Activated CD4-positive, alpha-beta T cell treated with anti-CD3 and anti-CD28 coated beads for 36 hours (primary cell): ENCODE measurements at regions of chr17 and their contacts with region 1.

Region 1: GRCh38 chr17:39927101-39927928 is at the starts of genes LRRC3C and ORMDL3:
- DNase-seq: peak; percentile 96
- ATAC-seq: peak; percentile 78
- H3K4me3 Mint-ChIP-seq: peak within 1 kb of the TSS; percentile 85
- H3K27ac Mint-ChIP-seq: peak within 1 kb of the TSS; percentile 95
- H3K4me1 Mint-ChIP-seq: peaks cover 56% of the 10 kb centered on the region
- H3K27me3 Mint-ChIP-seq: no peaks in the 10 kb centered on the region
- total RNA-seq, gene LRRC3C: not detected
- total RNA-seq, gene ORMDL3: 46.8 to 64.9 TPM

Region 2: DNA sequence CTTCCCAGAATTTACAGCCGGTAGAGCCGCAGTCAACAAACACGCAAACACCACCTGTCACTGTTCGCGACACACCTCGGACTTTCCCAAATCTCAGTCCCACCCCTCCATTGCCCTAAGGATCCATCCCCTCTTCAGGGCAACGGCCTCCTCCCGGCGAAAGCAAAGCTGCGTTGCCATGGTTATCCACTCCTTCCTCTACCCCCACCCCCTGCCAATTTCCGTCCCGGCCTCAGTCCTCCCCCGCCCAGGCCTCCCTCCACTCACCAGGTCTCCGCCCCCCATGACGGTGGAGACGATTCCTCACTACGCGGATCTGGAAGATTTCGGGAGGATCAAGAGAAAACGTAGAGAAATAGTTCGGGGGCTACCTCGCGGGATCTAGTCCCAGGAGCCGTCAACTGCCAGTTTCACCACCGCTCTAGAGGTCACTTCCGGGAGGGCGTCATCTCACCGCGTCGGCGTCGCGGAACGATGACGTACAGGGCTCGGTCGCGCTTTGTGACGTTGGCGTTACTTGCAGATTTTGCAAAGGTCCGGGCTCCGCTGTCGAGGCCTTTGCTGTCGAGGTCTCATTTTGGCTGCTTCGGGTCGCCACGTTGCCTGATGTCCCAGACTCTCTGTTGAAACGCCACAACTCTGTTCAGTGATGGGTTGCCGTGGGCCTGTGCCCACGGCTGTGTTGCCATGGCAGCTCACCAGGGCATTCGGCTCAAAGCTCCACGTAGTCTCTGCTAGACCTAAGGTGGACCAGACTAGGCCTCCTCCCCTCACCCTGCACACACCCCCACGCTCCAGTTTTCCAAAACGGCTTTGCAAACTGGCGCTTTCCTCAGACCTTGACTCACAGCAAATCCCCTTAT is 1102.2 kb before region 1 on chr17 and contains the start of gene CWC25:
- CTCF ChIA-PET with region 1: no interaction called
- POLR2A ChIA-PET with region 1: no interaction called
- intact Hi-C with region 1: loop called in 1 of 2 experiments (anchors 1 kb)
- DNase-seq: peak; percentile 95
- ATAC-seq: peak; percentile 82
- H3K4me3 Mint-ChIP-seq: peak within 1 kb of the TSS; percentile 99
- H3K27ac Mint-ChIP-seq: peak within 1 kb of the TSS; percentile 99
- H3K4me1 Mint-ChIP-seq: peaks cover 27% of the 10 kb centered on the region
- H3K27me3 Mint-ChIP-seq: no peaks in the 10 kb centered on the region
- total RNA-seq, gene CWC25: 23.3 to 24.0 TPM

Region 3: GRCh38 chr17:39064374-39064773 is 862.9 kb before region 1 on chr17:
- CTCF ChIA-PET with region 1: no interaction called
- POLR2A ChIA-PET with region 1: no interaction called
- intact Hi-C with region 1: no loop called
- DNase-seq: no peak
- ATAC-seq: no peak
- H3K4me3 Mint-ChIP-seq: no peak overlapping the region
- H3K27ac Mint-ChIP-seq: no peak overlapping the region
- H3K4me1 Mint-ChIP-seq: peaks cover 11% of the 10 kb centered on the region
- H3K27me3 Mint-ChIP-seq: no peaks in the 10 kb centered on the region

Region 4: GRCh38 chr17:39174907-39175694 is 752.2 kb before region 1 on chr17:
- CTCF ChIA-PET with region 1: no interaction called
- POLR2A ChIA-PET with region 1: no interaction called
- intact Hi-C with region 1: no loop called
- DNase-seq: peak; percentile 87
- ATAC-seq: peak; percentile 88
- H3K4me3 Mint-ChIP-seq: no peak overlapping the region
- H3K27ac Mint-ChIP-seq: no peak overlapping the region
- H3K4me1 Mint-ChIP-seq: peaks cover 9% of the 10 kb centered on the region
- H3K27me3 Mint-ChIP-seq: no peaks in the 10 kb centered on the region

Region 5: GRCh38 chr17:39450847-39451581 is 476.3 kb before region 1 on chr17 and contains the start of gene MED1:
- CTCF ChIA-PET with region 1: interaction called, 4 read pairs
- POLR2A ChIA-PET with region 1: no interaction called
- intact Hi-C with region 1: loop called in 1 of 2 experiments (anchors 1 kb)
- DNase-seq: peak; percentile 96
- ATAC-seq: peak; percentile 99
- H3K4me3 Mint-ChIP-seq: peak within 1 kb of the TSS; percentile 96
- H3K27ac Mint-ChIP-seq: peak within 1 kb of the TSS; percentile 96
- H3K4me1 Mint-ChIP-seq: peaks cover 30% of the 10 kb centered on the region
- H3K27me3 Mint-ChIP-seq: no peaks in the 10 kb centered on the region
- total RNA-seq, gene MED1: 66.1 to 76.1 TPM

Region 6: DNA sequence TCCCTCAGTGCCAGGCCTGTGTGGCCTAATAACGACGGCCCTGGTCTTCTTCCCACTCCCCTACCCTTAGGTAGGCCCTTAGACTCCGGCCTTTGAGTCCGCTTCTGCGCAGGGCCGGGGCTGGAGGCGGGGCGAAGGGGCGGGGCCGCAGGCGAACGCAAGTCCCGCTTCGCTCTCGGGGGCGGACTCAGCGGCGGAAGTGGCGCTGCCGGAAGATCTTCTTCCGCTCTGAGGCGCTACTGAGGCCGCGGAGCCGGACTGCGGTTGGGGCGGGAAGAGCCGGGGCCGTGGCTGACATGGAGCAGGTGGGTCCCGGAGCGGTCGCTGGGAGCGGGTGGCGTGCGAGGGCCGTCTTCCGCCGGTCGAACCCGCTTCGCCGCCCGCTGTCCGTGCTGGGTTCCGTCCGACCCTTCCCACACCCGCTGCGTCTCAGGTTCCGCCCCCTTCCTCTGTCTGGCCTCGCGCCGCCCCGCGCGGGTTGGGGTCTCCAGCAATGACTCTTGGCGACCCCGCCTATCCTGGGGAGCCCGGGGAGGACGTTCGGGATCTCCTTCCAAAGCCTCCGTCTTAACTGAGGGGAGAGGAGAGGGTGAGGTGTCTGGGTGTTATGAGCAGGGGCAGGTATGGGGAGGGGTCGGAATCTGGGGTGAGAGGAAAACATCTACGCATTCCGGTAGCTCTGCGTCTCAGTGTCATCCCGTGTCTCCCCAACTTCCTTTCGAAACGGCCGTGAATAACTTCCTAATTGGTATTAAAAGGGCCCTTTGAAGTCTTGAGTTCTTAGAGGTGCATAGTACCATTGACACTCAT is 290.2 kb before region 1 on chr17 and contains the start of gene STARD3:
- CTCF ChIA-PET with region 1: no interaction called
- POLR2A ChIA-PET with region 1: no interaction called
- intact Hi-C with region 1: loop called in 1 of 2 experiments (anchors 1 kb)
- DNase-seq: peak; percentile 96
- ATAC-seq: peak; percentile 87
- H3K4me3 Mint-ChIP-seq: peak within 1 kb of the TSS; percentile 86
- H3K27ac Mint-ChIP-seq: peak within 1 kb of the TSS; percentile 83
- H3K4me1 Mint-ChIP-seq: peaks cover 51% of the 10 kb centered on the region
- H3K27me3 Mint-ChIP-seq: no peaks in the 10 kb centered on the region
- total RNA-seq, gene STARD3: 46.8 to 77.9 TPM

Region 7: GRCh38 chr17:39730095-39730921 is 197.0 kb before region 1 on chr17 and contains the start of gene MIEN1:
- CTCF ChIA-PET with region 1: no interaction called
- POLR2A ChIA-PET with region 1: interaction called, 3 read pairs
- intact Hi-C with region 1: loop called in 1 of 2 experiments (anchors 1 kb)
- DNase-seq: peak; percentile 97
- ATAC-seq: peak; percentile 92
- H3K4me3 Mint-ChIP-seq: peak within 1 kb of the TSS; percentile 90
- H3K27ac Mint-ChIP-seq: peak within 1 kb of the TSS; percentile 88
- H3K4me1 Mint-ChIP-seq: peaks cover 15% of the 10 kb centered on the region
- H3K27me3 Mint-ChIP-seq: no peaks in the 10 kb centered on the region
- total RNA-seq, gene MIEN1: 32.5 to 39.4 TPM

Region 8: DNA sequence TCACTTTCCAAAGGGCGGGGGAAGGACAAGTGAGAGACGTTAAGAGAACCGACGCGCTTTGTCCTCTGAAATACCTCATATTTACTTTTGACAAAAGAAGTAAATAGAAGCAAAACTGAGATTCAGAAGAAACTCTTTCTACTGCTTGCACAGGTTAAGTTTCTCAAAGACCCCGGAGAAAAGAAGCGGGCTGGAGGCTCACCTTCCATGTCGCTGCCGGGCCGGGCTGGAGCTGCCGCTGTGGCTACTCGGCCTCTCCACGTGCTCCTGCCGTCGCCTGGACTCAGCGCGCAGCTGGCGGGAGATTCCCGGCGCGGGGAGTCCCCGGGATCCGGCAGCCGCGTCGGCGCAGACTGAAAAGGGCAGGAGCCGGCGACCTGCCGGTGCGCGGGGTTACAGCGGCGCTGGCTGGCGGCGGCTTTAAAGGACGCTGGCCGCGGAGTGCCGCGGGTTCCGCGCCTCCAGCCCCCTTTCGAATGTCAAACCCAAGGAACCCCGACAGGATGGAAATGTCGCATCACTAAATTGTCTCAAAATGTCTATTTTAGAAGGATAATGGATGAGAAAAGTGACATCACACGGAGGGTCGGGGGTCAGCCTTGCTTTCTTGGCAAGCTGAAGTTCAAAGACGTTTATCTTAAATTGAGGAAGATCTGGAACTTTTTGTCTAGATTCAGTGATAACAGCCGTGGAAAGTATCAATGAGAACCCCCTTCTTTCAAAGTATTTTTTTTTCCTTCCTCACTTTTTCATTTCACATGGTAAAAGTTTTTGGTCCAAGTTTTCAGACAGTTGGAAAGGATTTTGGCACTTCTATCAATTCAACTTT is 63.2 kb before region 1 on chr17 and contains the start of gene IKZF3:
- CTCF ChIA-PET with region 1: no interaction called
- POLR2A ChIA-PET with region 1: no interaction called
- intact Hi-C with region 1: loop called (anchors 1 to 2 kb)
- DNase-seq: peak; percentile 93
- ATAC-seq: peak; percentile 75
- H3K4me3 Mint-ChIP-seq: peak within 1 kb of the TSS; percentile 98
- H3K27ac Mint-ChIP-seq: peak within 1 kb of the TSS; percentile 97
- H3K4me1 Mint-ChIP-seq: peaks cover 67% of the 10 kb centered on the region
- H3K27me3 Mint-ChIP-seq: no peaks in the 10 kb centered on the region
- total RNA-seq, gene IKZF3: 37.6 to 50.4 TPM

Region 9: DNA sequence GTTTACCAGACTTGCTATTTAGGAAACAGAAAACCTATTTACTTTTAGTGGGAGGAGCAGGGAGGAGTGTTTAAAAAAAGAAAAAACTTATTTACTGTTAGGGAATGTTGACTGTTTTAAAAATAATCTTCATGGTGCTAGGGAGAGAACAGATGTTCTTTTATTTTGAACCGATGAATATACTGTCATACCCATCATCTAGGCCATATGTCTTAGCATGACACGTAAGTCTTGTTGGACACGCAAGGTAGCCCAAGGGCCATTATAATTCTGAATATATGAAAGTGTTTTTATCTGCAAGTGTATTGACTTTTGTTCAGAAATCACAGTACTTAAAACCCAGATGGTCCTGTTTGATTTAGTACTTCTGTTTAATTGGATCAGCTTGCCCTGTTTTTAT is 303.4 kb after region 1 on chr17:
- CTCF ChIA-PET with region 1: no interaction called
- POLR2A ChIA-PET with region 1: no interaction called
- intact Hi-C with region 1: no loop called
- DNase-seq: no peak
- ATAC-seq: no peak
- H3K4me3 Mint-ChIP-seq: no peak overlapping the region
- H3K27ac Mint-ChIP-seq: no peak overlapping the region
- H3K4me1 Mint-ChIP-seq: peaks cover 5% of the 10 kb centered on the region
- H3K27me3 Mint-ChIP-seq: no peaks in the 10 kb centered on the region

Region 10: GRCh38 chr17:40433551-40434415 is 506.5 kb after region 1 on chr17:
- CTCF ChIA-PET with region 1: no interaction called
- POLR2A ChIA-PET with region 1: no interaction called
- intact Hi-C with region 1: no loop called
- DNase-seq: peak; percentile 64
- ATAC-seq: peak; percentile 85
- H3K4me3 Mint-ChIP-seq: no peak overlapping the region
- H3K27ac Mint-ChIP-seq: no peak overlapping the region
- H3K4me1 Mint-ChIP-seq: peaks cover 9% of the 10 kb centered on the region
- H3K27me3 Mint-ChIP-seq: no peaks in the 10 kb centered on the region

Region 11: DNA sequence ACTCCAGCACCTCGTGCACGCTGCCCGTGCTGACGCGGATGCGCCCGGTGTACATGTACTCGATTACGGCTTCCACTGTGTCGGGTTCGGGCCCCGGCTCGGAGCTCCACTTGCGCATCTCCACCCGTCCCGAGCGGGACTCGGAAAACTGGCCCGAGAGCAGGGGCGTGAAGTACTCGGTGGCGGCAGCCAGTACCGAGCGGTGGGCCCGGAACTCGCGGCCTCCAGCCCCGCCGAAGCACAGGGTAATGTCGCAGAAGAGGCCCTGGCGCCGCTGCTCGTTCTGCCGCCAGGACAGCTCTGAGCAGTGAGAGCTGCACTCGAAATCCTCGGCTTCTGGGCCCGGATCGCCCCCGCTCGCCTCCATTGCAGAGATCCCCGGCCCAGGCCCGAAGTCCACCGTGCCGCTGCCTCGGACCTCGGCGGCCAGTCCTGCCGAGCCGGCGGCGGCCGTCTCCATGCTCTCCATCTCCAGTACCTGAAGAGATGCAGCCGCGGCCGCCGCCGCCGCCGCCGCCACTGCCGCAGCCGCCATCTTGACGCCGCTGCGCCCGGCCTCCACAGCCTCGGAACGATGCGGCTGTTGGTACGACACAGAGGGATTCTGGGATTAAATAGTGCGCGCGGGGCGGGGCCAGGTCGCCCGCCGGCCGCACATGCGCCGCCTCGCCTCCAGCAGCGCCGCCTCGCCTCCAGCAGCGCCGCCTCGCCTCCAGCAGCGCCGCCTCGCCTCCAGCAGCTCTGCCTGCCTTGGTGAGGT is 1937.7 kb after region 1 on chr17 and contains the start of gene KLHL11:
- CTCF ChIA-PET with region 1: no interaction called
- POLR2A ChIA-PET with region 1: no interaction called
- intact Hi-C with region 1: loop called in 1 of 2 experiments (anchors 10 kb)
- DNase-seq: peak; percentile 94
- ATAC-seq: peak; percentile 88
- H3K4me3 Mint-ChIP-seq: no peak within 1 kb of the TSS
- H3K27ac Mint-ChIP-seq: peak within 1 kb of the TSS; percentile 68
- H3K4me1 Mint-ChIP-seq: peaks cover 49% of the 10 kb centered on the region
- H3K27me3 Mint-ChIP-seq: no peaks in the 10 kb centered on the region
- total RNA-seq, gene KLHL11: 16.4 to 18.0 TPM